Gastrocnemius medialis (tissue), 4 donors: ENCODE measurements at regions of chr7 and their contacts with region 1.

Region 1: DNA sequence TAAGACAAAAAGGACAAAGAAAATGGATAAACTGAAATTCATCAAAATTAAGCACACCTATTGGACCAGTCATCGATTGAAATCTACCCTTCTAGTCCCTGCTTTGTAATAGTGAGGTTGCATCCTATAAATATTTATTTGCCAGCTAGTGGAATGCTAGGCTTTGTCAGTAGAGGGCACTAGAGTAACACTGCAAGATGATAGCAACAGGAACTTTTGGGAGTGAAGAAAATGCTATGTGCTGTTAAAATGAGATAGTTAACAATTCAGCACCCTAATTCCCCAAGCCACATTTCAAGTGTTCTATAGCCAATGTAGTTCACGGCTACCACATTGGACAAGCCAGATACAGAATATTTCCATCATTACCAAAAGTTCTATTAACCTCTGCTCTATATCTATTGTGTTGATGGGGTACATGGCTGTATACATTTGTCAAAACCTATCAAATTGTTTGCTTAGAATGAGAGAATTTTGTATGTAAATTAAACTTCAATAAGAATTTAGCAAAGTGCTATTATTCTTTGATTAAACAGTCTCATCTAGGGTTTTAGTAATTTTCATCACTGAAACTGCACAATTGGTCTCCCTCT is 69.8 kb downstream of the LSMEM1 start:
- DNase-seq: no peak
- ATAC-seq: peak in 1 of 2 donors; percentile 69
- H3K4me3 ChIP-seq: no peak overlapping the region
- H3K27ac ChIP-seq: no peak overlapping the region
- H3K4me1 ChIP-seq: no peaks in the 10 kb centered on the region
- H3K27me3 ChIP-seq: no peaks in the 10 kb centered on the region
- CTCF ChIP-seq: peak; percentile 59 to 92 (median 82)
- POLR2A ChIP-seq: no peak

Region 2: GRCh38 chr7:112538726-112539255 is 11.8 kb before region 1 on chr7:
- in situ Hi-C with region 1: no loop called
- intact Hi-C with region 1: no loop called
- DNase-seq: no peak
- ATAC-seq: no peak
- H3K4me3 ChIP-seq: no peak overlapping the region
- H3K27ac ChIP-seq: no peak overlapping the region
- H3K4me1 ChIP-seq: no peaks in the 10 kb centered on the region
- H3K27me3 ChIP-seq: no peaks in the 10 kb centered on the region
- CTCF ChIP-seq: no peak
- POLR2A ChIP-seq: no peak

Region 3: GRCh38 chr7:112898432-112899290 is 348.1 kb after region 1 on chr7:
- in situ Hi-C with region 1: loop called in 2 of 4 experiments (anchors 25 kb)
- intact Hi-C with region 1: loop called (anchors 10 kb)
- DNase-seq: no peak
- ATAC-seq: peak in 1 of 2 donors; percentile 78
- H3K4me3 ChIP-seq: no peak overlapping the region
- H3K27ac ChIP-seq: no peak overlapping the region
- H3K4me1 ChIP-seq: no peaks in the 10 kb centered on the region
- H3K27me3 ChIP-seq: no peaks in the 10 kb centered on the region
- CTCF ChIP-seq: peak; percentile 31 to 68 (median 48)
- POLR2A ChIP-seq: no peak

Region 4: GRCh38 chr7:113710310-113711106 is 1159.9 kb after region 1 on chr7:
- in situ Hi-C with region 1: loop called in 1 of 4 experiments (anchors 25 kb)
- intact Hi-C with region 1: no loop called
- DNase-seq: peak in 1 of 2 donors; percentile 14
- ATAC-seq: peak; percentile 47 to 74
- H3K4me3 ChIP-seq: no peak overlapping the region
- H3K27ac ChIP-seq: no peak overlapping the region
- H3K4me1 ChIP-seq: peaks cover 6 to 15% of the 10 kb centered on the region in 2 donors
- H3K27me3 ChIP-seq: no peaks in the 10 kb centered on the region
- CTCF ChIP-seq: peak; percentile 61 to 86 (median 65)
- POLR2A ChIP-seq: no peak